ENCODE measurements at regions of chr22 and their contacts with region 1.

Region 1: DNA sequence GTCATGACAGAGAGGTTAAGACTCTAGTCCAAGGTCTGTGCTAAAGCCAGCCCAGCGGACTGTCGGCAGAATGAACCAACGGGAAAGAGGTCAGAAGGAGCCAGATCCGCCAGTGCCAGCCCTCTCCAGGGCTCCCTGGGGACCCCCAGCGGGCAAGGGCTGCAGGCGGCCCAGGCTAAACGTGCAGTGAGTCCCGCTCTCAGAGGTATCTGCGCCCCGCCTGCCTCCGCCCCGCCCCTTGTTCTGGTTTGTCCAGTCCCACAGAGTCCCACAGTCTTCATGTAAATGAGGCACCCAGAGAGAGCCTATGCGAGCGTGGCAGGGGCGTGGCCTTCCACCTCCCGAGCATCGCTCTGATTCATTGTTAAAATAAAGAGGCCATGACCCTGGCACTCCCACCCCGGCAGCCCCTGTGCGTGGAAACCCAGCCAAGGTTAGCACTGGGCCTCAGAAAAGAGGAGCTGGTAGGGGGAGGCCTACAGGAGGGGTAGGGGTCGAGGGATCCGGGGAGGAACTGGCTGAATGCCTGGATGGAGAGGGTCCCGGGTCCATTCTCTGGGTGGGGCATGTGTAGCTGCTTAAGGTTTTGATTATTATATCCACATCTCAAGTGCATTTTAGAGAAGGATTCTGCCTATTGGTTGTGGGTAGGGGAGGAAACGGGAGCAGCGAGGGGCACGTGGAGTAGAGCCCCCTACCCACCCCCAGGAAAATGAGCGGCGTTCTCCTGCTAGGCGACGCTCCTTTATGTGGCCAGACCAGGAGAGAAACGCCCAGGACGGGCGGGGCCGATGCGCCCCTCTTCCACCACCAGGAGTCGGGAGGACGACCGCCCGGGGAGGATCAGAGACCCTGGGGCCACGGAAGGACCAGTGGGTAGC is at the start of gene TRIOBP:
- DNase-seq: peak; percentile 89 to 98
- H3K4me3 ChIP-seq: peak within 1 kb of the TSS in 1 of 2 donors; percentile 49
- H3K27ac ChIP-seq: peak within 1 kb of the TSS; percentile 61 to 72
- H3K4me1 ChIP-seq: peaks cover 0 to 11% of the 10 kb centered on the region in 2 donors
- H3K27me3 ChIP-seq: no peaks in the 10 kb centered on the region
- CTCF ChIP-seq: peak; percentile 30 to 47 (median 32)
- total RNA-seq, gene TRIOBP: 253 TPM

Region 2: DNA sequence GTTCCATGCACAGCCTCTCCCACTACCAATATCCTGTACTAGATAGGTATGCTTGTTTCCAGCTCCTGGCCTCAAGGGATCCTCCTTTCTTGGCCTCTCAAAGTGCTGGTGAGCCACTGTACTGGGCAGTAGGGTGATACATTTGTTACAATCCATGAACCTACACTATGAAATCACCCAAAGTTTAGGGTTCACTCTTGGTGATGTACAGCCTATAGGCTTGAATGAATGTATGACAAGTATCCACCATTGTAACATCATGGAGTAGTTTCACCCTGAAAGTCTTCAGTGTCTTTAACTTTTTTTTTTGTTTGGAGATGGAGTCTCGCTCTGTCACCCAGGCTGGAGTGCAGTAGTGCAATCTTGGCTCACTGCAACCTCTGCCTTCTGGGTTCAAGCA is 31.7 kb after region 1 on chr22:
- intact Hi-C with region 1: loop called (anchors 1 kb)
- DNase-seq: no peak
- H3K4me3 ChIP-seq: no peak overlapping the region
- H3K27ac ChIP-seq: peak overlapping the region; percentile 31 to 77
- H3K4me1 ChIP-seq: peaks cover 0 to 10% of the 10 kb centered on the region in 2 donors
- H3K27me3 ChIP-seq: no peaks in the 10 kb centered on the region
- CTCF ChIP-seq: no peak

Region 3: DNA sequence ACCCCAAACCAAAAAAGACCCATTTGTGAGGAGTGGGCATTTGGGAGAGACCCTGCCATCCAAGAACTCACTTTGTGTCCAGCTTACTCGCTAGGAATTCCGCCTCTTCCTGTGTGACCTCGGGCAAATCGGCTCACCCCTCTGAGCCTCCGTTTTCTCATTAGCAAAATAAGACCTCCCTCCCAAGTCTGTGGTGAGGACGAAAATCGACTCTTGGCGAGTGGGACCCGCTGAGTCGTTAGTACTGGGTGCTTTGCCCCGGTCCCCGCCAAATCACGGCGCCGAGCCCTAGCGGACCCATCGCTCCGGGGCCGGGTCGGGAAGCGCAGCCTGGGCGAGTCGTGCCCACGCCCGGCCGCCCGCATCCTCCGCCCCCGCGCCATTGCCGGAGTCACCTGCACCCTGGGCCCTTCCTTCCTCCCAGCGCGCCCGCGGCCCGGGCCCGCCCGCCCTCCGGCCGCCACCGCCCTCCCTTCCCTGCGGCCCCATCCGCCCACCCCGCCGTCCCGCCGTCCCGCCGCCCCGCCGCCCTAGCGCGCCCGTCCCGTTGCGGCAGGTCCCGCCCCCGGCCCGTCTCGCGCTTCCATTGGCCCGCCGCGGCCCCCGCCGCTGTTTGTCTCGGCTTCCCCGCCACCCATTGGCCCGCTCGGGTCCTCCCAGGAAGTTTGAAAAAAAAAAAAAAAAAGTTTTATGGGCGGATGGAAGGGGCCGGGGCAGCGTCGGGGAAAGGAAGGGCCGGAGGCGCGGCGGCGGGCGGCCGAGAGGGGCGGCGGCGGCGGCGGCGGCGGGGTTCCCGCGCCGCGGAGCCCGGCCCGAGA is 48.9 kb after region 1 on chr22:
- intact Hi-C with region 1: loop called (anchors 2 kb)
- DNase-seq: peak; percentile 56 to 94
- H3K4me3 ChIP-seq: peak overlapping the region; percentile 93 to 99
- H3K27ac ChIP-seq: peak overlapping the region; percentile 83 to 96
- H3K4me1 ChIP-seq: peaks cover 25 to 46% of the 10 kb centered on the region in 2 donors
- H3K27me3 ChIP-seq: no peaks in the 10 kb centered on the region
- CTCF ChIP-seq: no peak

Measured in ascending aorta (tissue), 2 donors.